ENCODE measurements at regions of chr1 and their contacts with region 1.

Region 1: DNA sequence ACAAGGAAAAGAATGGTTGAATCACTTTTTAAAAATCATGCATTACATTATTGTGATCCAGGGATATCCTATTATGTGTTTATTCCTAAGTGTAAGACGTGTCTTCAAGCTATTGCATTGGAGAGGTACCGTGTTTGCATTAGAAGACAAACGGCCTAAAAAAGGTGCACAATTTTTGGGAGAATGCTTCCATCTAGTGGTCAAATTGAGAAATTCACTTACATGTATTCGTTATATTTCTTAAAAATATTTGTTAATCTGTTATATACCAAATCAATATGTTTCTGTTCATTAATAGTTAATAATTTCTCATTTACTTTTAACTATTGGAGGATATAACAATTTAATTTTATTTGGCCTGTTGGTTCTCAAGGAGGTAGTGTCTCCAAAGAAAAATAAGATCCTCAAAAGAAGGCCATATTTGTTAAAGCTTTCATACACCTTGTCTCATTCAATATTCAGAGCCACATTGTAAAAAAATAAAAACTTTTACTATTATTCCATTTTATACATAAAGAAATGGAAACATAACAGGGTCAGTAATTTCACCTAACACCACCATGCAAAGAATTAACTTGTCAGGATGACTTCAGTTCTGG is 40.5 kb upstream of the KCTD3 start:
- DNase-seq: peak; percentile 15 to 54 (median 27)
- H3K4me3 ChIP-seq: no peak overlapping the region
- H3K4me3 Mint-ChIP-seq: no peak overlapping the region
- H3K27ac ChIP-seq: no peak overlapping the region
- H3K27ac Mint-ChIP-seq: no peak overlapping the region
- H3K4me1 ChIP-seq: peaks cover 15 to 16% of the 10 kb centered on the region in 2 donors
- H3K4me1 Mint-ChIP-seq: peaks cover 22% of the 10 kb centered on the region
- H3K27me3 ChIP-seq: no peaks in the 10 kb centered on the region
- H3K27me3 Mint-ChIP-seq: peaks cover 1 to 8% (median 2%) of the 10 kb centered on the region in 3 donors
- CTCF ChIP-seq: peak; percentile 75

Region 2: DNA sequence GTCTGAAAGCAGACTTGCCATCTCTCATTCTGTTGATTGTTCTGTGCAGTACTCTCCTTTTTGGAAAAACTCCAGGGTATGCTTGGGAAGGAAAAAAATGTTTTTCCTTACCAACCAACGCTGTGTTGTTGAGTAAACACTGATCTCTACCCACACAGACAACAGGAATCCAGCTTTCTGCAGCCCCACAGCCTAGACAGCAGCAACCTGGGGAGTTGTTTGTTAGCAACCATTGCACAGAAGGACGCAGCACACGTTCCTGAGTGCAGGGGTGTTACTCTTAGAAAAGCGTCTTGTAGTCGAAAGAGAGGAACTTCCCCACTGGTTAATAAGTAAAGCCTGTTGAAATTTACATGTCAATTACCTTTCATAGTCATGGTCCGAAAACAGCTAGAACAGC is 1189.1 kb before region 1 on chr1:
- intact Hi-C with region 1: loop called in 1 of 2 experiments (anchors 5 kb)
- DNase-seq: no peak
- H3K4me3 ChIP-seq: no peak overlapping the region
- H3K4me3 Mint-ChIP-seq: no peak overlapping the region
- H3K27ac ChIP-seq: no peak overlapping the region
- H3K27ac Mint-ChIP-seq: no peak overlapping the region
- H3K4me1 ChIP-seq: no peaks in the 10 kb centered on the region
- H3K4me1 Mint-ChIP-seq: no peaks in the 10 kb centered on the region
- H3K27me3 ChIP-seq: no peaks in the 10 kb centered on the region
- H3K27me3 Mint-ChIP-seq: peaks cover 0 to 3% (median 2%) of the 10 kb centered on the region in 3 donors
- CTCF ChIP-seq: no peak

Region 3: GRCh38 chr1:214632091-214632490 is 894.6 kb before region 1 on chr1:
- intact Hi-C with region 1: loop called in 1 of 2 experiments (anchors 5 kb)
- DNase-seq: no peak
- H3K4me3 ChIP-seq: no peak overlapping the region
- H3K4me3 Mint-ChIP-seq: no peak overlapping the region
- H3K27ac ChIP-seq: no peak overlapping the region
- H3K27ac Mint-ChIP-seq: no peak overlapping the region
- H3K4me1 ChIP-seq: no peaks in the 10 kb centered on the region
- H3K4me1 Mint-ChIP-seq: no peaks in the 10 kb centered on the region
- H3K27me3 ChIP-seq: no peaks in the 10 kb centered on the region
- H3K27me3 Mint-ChIP-seq: no peaks in the 10 kb centered on the region
- CTCF ChIP-seq: no peak